Activated naive CD4-positive, alpha-beta T cell treated with anti-CD3 and anti-CD28 coated beads for 36 hours (primary cell): ENCODE measurements at regions of chr3 and their contacts with region 1.

Region 1: GRCh38 chr3:115783938-115784738 is 160.8 kb downstream of the GAP43 start:
- DNase-seq: peak; percentile 92
- H3K4me3 Mint-ChIP-seq: peak overlapping the region; percentile 90
- H3K27ac Mint-ChIP-seq: peak overlapping the region; percentile 96
- H3K4me1 Mint-ChIP-seq: peaks cover 18% of the 10 kb centered on the region
- H3K27me3 Mint-ChIP-seq: no peaks in the 10 kb centered on the region

Region 2: DNA sequence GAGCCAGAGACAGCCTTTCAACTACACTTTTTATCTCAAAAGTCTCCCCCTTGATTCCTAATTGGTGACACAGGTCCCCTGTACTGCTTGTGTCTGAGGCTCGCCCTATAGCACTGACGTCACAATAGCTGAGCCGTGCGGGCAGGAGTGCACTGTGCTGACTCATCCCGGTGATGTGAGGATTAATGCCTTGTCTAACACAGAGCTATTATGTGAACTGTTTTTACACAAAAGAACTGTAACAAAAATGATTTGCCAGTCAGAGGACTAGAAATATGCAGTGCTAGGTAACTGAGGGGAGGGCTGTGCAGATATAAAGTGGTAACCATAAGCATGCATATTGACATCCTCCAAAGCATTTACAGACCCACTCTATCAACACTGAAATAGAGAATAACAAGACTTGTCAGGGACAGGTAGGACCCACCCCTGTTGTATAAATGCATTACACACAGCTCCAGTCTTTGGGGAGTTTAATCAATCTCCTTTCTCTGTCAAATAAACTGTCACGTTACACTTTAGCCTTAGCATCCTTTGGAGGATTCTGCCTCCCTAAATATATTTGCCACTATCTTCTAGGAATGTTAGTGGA is 1285.3 kb before region 1 on chr3:
- CTCF ChIA-PET with region 1: no interaction called
- intact Hi-C with region 1: loop called (anchors 10 kb)
- DNase-seq: no peak
- H3K4me3 Mint-ChIP-seq: no peak overlapping the region
- H3K27ac Mint-ChIP-seq: no peak overlapping the region
- H3K4me1 Mint-ChIP-seq: peaks cover 36% of the 10 kb centered on the region
- H3K27me3 Mint-ChIP-seq: peaks cover 6% of the 10 kb centered on the region

Region 3: GRCh38 chr3:115040673-115041286 is 743.4 kb before region 1 on chr3:
- CTCF ChIA-PET with region 1: no interaction called
- intact Hi-C with region 1: loop called (anchors 2 kb)
- DNase-seq: peak; percentile 65
- H3K4me3 Mint-ChIP-seq: no peak overlapping the region
- H3K27ac Mint-ChIP-seq: no peak overlapping the region
- H3K4me1 Mint-ChIP-seq: peaks cover 16% of the 10 kb centered on the region
- H3K27me3 Mint-ChIP-seq: no peaks in the 10 kb centered on the region

Region 4: DNA sequence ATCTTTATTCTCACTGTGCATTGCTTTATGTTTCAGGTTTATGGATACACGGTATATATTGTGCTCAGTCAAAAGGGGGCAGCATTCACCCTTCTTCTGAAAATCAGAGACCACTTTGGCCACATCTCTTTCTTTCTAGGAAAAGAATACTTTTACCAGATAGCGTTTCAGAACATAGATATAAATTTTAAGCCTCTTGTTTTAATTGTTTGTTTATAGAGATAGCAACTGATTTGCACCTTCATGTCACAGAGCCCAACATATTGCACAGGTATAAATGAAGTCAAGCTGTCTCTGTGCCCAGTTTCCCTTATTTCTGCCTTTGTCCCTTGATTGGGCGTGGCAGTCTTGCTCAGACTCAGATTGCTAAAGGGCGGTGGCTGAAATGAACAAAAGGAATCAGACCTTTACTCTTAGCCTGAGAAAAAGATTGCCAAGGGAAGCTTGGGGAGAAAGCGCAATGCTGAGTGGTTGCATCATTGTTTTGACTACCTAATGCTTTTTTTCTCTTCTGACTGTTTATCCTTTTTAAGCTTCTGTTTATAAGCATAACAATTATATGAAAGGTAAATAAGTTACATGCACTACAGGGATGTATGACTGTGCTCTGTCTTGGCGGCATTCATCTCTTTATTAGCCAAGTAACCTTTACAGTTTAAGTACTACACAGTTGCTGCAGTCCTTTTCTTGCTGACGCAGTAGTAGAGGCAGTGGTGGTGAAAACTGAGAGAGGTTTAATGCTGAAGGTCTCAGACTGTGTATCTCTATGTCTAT is 566.3 kb before region 1 on chr3:
- CTCF ChIA-PET with region 1: interaction called, 4 read pairs
- intact Hi-C with region 1: loop called (anchors 1 kb)
- DNase-seq: peak; percentile 23
- H3K4me3 Mint-ChIP-seq: no peak overlapping the region
- H3K27ac Mint-ChIP-seq: no peak overlapping the region
- H3K4me1 Mint-ChIP-seq: no peaks in the 10 kb centered on the region
- H3K27me3 Mint-ChIP-seq: no peaks in the 10 kb centered on the region

Region 5: GRCh38 chr3:115658337-115659181 is 125.6 kb before region 1 on chr3:
- CTCF ChIA-PET with region 1: no interaction called
- intact Hi-C with region 1: loop called (anchors 1 kb)
- DNase-seq: peak; percentile 84
- H3K4me3 Mint-ChIP-seq: peak overlapping the region; percentile 90
- H3K27ac Mint-ChIP-seq: peak overlapping the region; percentile 96
- H3K4me1 Mint-ChIP-seq: peaks cover 45% of the 10 kb centered on the region
- H3K27me3 Mint-ChIP-seq: peaks cover 3% of the 10 kb centered on the region

Region 6: GRCh38 chr3:115814778-115815380 is 30.7 kb after region 1 on chr3:
- CTCF ChIA-PET with region 1: interaction called, 18 read pairs
- intact Hi-C with region 1: loop called (anchors 1 kb)
- DNase-seq: peak; percentile 82
- H3K4me3 Mint-ChIP-seq: no peak overlapping the region
- H3K27ac Mint-ChIP-seq: no peak overlapping the region
- H3K4me1 Mint-ChIP-seq: no peaks in the 10 kb centered on the region
- H3K27me3 Mint-ChIP-seq: no peaks in the 10 kb centered on the region